H1 (cell line): ENCODE measurements at regions of chr19 and their contacts with region 1.

Region 1: GRCh38 chr19:35911790-35912189 is 3.7 kb upstream of the TYROBP start:
- DNase-seq: no peak
- H3K4me3 ChIP-seq: no peak overlapping the region
- H3K27ac ChIP-seq: no peak overlapping the region
- H3K4me1 ChIP-seq: peaks cover 0 to 17% (median 7%) of the 10 kb centered on the region in 4 experiments; a peak in 4 of 7 replicates
- H3K27me3 ChIP-seq: no peaks in the 10 kb centered on the region
- CTCF ChIP-seq: no peak
- EP300 ChIP-seq: no peak
- POLR2A ChIP-seq: no peak
- RAD21 ChIP-seq: no peak

Region 2: DNA sequence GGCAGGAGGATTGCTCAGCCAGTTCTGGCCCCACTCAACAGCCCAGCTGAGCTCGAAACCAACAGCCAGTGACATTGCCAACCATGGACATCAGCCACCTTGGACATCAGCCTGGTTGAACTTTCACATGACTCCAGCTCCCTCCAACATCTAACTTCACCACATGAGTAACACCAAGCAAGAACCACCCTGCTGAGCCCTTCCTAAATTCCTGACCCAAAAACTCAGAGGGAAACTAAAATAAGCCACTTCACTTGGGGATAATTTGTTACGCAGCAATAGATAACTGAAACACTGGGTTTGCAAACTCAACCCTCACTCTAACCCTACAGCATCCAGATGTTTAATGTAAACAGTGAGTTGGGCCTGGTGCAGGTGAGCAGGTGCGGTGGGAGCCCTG is 13.7 kb after region 1 on chr19:
- CTCF ChIA-PET with region 1: interaction called, 13 read pairs
- POLR2A ChIA-PET with region 1: no interaction called
- DNase-seq: no peak
- H3K4me3 ChIP-seq: no peak overlapping the region
- H3K27ac ChIP-seq: no peak overlapping the region
- H3K4me1 ChIP-seq: no peaks in the 10 kb centered on the region
- H3K27me3 ChIP-seq: no peaks in the 10 kb centered on the region
- CTCF ChIP-seq: no peak
- EP300 ChIP-seq: no peak
- POLR2A ChIP-seq: no peak
- RAD21 ChIP-seq: no peak